IMR-90 (cell line): ENCODE measurements at regions of chr1 and their contacts with region 1.

Region 1: GRCh38 chr1:161389691-161390558 is 22.2 kb upstream of the CFAP126 start:
- DNase-seq: peak; percentile 98
- ATAC-seq: peak; percentile 94
- H3K4me3 ChIP-seq: peak overlapping the region; percentile 90
- H3K27ac ChIP-seq: peak overlapping the region; percentile 89
- H3K4me1 ChIP-seq: no peaks in the 10 kb centered on the region
- H3K27me3 ChIP-seq: no peaks in the 10 kb centered on the region
- CTCF ChIP-seq: no peak
- POLR2A ChIP-seq: peak; percentile 84
- RAD21 ChIP-seq: no peak

Region 2: GRCh38 chr1:159829822-159830465 is 1560.0 kb before region 1 on chr1:
- CTCF ChIA-PET with region 1: no interaction called
- POLR2A ChIA-PET with region 1: no interaction called
- dilution Hi-C with region 1: no loop called
- in situ Hi-C with region 1: no loop called
- intact Hi-C with region 1: loop called (anchors 10 kb)
- DNase-seq: peak; percentile 81
- ATAC-seq: peak; percentile 80
- H3K4me3 ChIP-seq: no peak overlapping the region
- H3K27ac ChIP-seq: no peak overlapping the region
- H3K4me1 ChIP-seq: peaks cover 2% of the 10 kb centered on the region
- H3K27me3 ChIP-seq: no peaks in the 10 kb centered on the region; the same call in 1 of the 2 replicates
- CTCF ChIP-seq: no peak
- POLR2A ChIP-seq: no peak
- RAD21 ChIP-seq: no peak

Region 3: GRCh38 chr1:162966613-162967012 is 1576.7 kb after region 1 on chr1:
- CTCF ChIA-PET with region 1: no interaction called
- POLR2A ChIA-PET with region 1: no interaction called
- dilution Hi-C with region 1: no loop called
- in situ Hi-C with region 1: no loop called
- intact Hi-C with region 1: loop called (anchors 10 kb)
- DNase-seq: no peak
- ATAC-seq: no peak
- H3K4me3 ChIP-seq: no peak overlapping the region
- H3K27ac ChIP-seq: no peak overlapping the region
- H3K4me1 ChIP-seq: peaks cover 5% of the 10 kb centered on the region
- H3K27me3 ChIP-seq: no peaks in the 10 kb centered on the region
- CTCF ChIP-seq: no peak
- POLR2A ChIP-seq: no peak
- RAD21 ChIP-seq: no peak